ENCODE measurements at regions of chr19 and their contacts with region 1.

Region 1: GRCh38 chr19:6963937-6964336 is 57.3 kb downstream of the MBD3L2B start:
- DNase-seq: peak in 8 of 9 experiments; percentile 2 to 69 (median 46)
- ATAC-seq: no peak
- H3K4me3 ChIP-seq: no peak overlapping the region
- H3K4me3 Mint-ChIP-seq: no peak overlapping the region
- H3K27ac ChIP-seq: no peak overlapping the region
- H3K27ac Mint-ChIP-seq: no peak overlapping the region
- H3K4me1 ChIP-seq: no peaks in the 10 kb centered on the region
- H3K4me1 Mint-ChIP-seq: peaks cover 3% of the 10 kb centered on the region
- H3K27me3 ChIP-seq: no peaks in the 10 kb centered on the region
- H3K27me3 Mint-ChIP-seq: no peaks in the 10 kb centered on the region
- CTCF ChIP-seq: peak; percentile 66

Region 2: DNA sequence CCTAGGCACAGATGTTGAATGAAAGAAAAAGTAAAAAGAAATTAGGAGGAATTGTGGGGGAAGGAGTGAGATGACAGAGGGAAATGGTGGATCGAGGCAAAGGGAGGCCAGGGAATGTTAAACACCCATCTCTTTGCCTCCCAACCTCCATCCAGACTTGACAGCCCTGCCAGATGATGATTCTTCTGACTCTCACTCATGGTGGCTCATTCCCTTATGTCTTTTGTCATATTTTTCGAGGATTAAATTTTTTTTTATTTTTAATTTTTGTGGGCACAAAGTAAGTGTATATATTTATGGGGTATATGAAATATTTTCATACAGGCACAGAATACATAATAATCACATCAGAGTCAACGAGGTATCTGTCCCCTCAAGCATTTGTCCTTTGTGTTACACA is 33.7 kb before region 1 on chr19:
- CTCF ChIA-PET with region 1: interaction called, 4 read pairs
- POLR2A ChIA-PET with region 1: no interaction called
- intact Hi-C with region 1: loop called in 1 of 2 experiments (anchors 1 kb)
- DNase-seq: no peak
- ATAC-seq: no peak
- H3K4me3 ChIP-seq: no peak overlapping the region
- H3K4me3 Mint-ChIP-seq: no peak overlapping the region
- H3K27ac ChIP-seq: no peak overlapping the region
- H3K27ac Mint-ChIP-seq: no peak overlapping the region
- H3K4me1 ChIP-seq: no peaks in the 10 kb centered on the region
- H3K4me1 Mint-ChIP-seq: peaks cover 9% of the 10 kb centered on the region
- H3K27me3 ChIP-seq: no peaks in the 10 kb centered on the region
- H3K27me3 Mint-ChIP-seq: no peaks in the 10 kb centered on the region
- CTCF ChIP-seq: no peak

Region 3: DNA sequence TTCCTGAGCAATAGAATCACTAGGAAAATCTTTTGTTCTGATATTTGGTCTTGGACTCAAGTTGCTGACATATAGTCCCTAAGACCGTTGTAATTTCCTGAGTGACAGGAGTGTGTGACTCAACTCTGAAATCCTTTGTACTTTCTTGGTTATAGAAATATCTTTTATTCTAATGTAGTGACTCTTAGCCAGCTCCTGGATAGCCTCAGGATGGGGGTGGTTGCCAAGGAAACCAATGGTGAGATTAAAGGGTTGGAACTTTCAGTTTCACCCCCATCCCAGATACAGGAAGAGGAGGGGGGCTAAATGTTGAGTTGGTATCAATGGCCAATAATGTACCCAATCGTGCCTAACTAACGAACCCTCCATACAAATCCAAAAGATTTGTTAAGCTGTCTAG is 15.5 kb after region 1 on chr19:
- CTCF ChIA-PET with region 1: no interaction called
- POLR2A ChIA-PET with region 1: no interaction called
- intact Hi-C with region 1: no loop called
- DNase-seq: no peak
- ATAC-seq: no peak
- H3K4me3 ChIP-seq: no peak overlapping the region
- H3K4me3 Mint-ChIP-seq: no peak overlapping the region
- H3K27ac ChIP-seq: no peak overlapping the region
- H3K27ac Mint-ChIP-seq: no peak overlapping the region
- H3K4me1 ChIP-seq: no peaks in the 10 kb centered on the region
- H3K4me1 Mint-ChIP-seq: no peaks in the 10 kb centered on the region
- H3K27me3 ChIP-seq: no peaks in the 10 kb centered on the region
- H3K27me3 Mint-ChIP-seq: no peaks in the 10 kb centered on the region
- CTCF ChIP-seq: no peak

Measured in CD8-positive, alpha-beta T cell (primary cell).